ENCODE measurements at regions of chr1 and their contacts with region 1.

Region 1: GRCh38 chr1:11719313-11720032 is 16.5 kb upstream of the AGTRAP start:
- DNase-seq: peak; percentile 73 to 94 (median 90)
- ATAC-seq: peak; percentile 87
- H3K4me3 ChIP-seq: peak overlapping the region; percentile 51 to 66
- H3K4me3 Mint-ChIP-seq: peak overlapping the region; percentile 88
- H3K27ac ChIP-seq: peak overlapping the region; percentile 52 to 74
- H3K27ac Mint-ChIP-seq: peak overlapping the region; percentile 91
- H3K4me1 ChIP-seq: peaks cover 15% of the 10 kb centered on the region
- H3K4me1 Mint-ChIP-seq: peaks cover 13% of the 10 kb centered on the region
- H3K27me3 ChIP-seq: no peaks in the 10 kb centered on the region
- H3K27me3 Mint-ChIP-seq: no peaks in the 10 kb centered on the region
- CTCF ChIP-seq: peak; percentile 96

Region 2: GRCh38 chr1:11248155-11248554 is 471.3 kb before region 1 on chr1:
- CTCF ChIA-PET with region 1: no interaction called
- POLR2A ChIA-PET with region 1: no interaction called
- intact Hi-C with region 1: loop called in 1 of 2 experiments (anchors 5 kb)
- DNase-seq: no peak
- ATAC-seq: no peak
- H3K4me3 ChIP-seq: no peak overlapping the region
- H3K4me3 Mint-ChIP-seq: no peak overlapping the region
- H3K27ac ChIP-seq: no peak overlapping the region
- H3K27ac Mint-ChIP-seq: peak overlapping the region; percentile 45
- H3K4me1 ChIP-seq: no peaks in the 10 kb centered on the region
- H3K4me1 Mint-ChIP-seq: peaks cover 12% of the 10 kb centered on the region
- H3K27me3 ChIP-seq: no peaks in the 10 kb centered on the region
- H3K27me3 Mint-ChIP-seq: no peaks in the 10 kb centered on the region
- CTCF ChIP-seq: no peak

Region 3: GRCh38 chr1:11478571-11479374 is 240.7 kb before region 1 on chr1 and contains the start of gene DISP3:
- CTCF ChIA-PET with region 1: no interaction called
- POLR2A ChIA-PET with region 1: no interaction called
- intact Hi-C with region 1: loop called in 1 of 2 experiments (anchors 10 kb)
- DNase-seq: peak; percentile 44 to 84 (median 63)
- ATAC-seq: peak; percentile 91
- H3K4me3 ChIP-seq: peak within 1 kb of the TSS; percentile 51 to 62
- H3K4me3 Mint-ChIP-seq: peak within 1 kb of the TSS; percentile 70
- H3K27ac ChIP-seq: no peak within 1 kb of the TSS
- H3K27ac Mint-ChIP-seq: no peak within 1 kb of the TSS
- H3K4me1 ChIP-seq: peaks cover 11% of the 10 kb centered on the region
- H3K4me1 Mint-ChIP-seq: peaks cover 15% of the 10 kb centered on the region
- H3K27me3 ChIP-seq: peaks cover 0 to 24% of the 10 kb centered on the region in 2 experiments
- H3K27me3 Mint-ChIP-seq: peaks cover 54% of the 10 kb centered on the region
- CTCF ChIP-seq: peak; percentile 49
- total RNA-seq, gene DISP3: 0.28 to 0.57 TPM

Region 4: GRCh38 chr1:11598461-11598860 is 121.0 kb before region 1 on chr1:
- CTCF ChIA-PET with region 1: no interaction called
- POLR2A ChIA-PET with region 1: no interaction called
- intact Hi-C with region 1: no loop called
- DNase-seq: no peak
- ATAC-seq: no peak
- H3K4me3 ChIP-seq: no peak overlapping the region
- H3K4me3 Mint-ChIP-seq: no peak overlapping the region
- H3K27ac ChIP-seq: no peak overlapping the region
- H3K27ac Mint-ChIP-seq: no peak overlapping the region
- H3K4me1 ChIP-seq: no peaks in the 10 kb centered on the region
- H3K4me1 Mint-ChIP-seq: no peaks in the 10 kb centered on the region
- H3K27me3 ChIP-seq: no peaks in the 10 kb centered on the region
- H3K27me3 Mint-ChIP-seq: peaks cover 25% of the 10 kb centered on the region
- CTCF ChIP-seq: no peak

Region 5: DNA sequence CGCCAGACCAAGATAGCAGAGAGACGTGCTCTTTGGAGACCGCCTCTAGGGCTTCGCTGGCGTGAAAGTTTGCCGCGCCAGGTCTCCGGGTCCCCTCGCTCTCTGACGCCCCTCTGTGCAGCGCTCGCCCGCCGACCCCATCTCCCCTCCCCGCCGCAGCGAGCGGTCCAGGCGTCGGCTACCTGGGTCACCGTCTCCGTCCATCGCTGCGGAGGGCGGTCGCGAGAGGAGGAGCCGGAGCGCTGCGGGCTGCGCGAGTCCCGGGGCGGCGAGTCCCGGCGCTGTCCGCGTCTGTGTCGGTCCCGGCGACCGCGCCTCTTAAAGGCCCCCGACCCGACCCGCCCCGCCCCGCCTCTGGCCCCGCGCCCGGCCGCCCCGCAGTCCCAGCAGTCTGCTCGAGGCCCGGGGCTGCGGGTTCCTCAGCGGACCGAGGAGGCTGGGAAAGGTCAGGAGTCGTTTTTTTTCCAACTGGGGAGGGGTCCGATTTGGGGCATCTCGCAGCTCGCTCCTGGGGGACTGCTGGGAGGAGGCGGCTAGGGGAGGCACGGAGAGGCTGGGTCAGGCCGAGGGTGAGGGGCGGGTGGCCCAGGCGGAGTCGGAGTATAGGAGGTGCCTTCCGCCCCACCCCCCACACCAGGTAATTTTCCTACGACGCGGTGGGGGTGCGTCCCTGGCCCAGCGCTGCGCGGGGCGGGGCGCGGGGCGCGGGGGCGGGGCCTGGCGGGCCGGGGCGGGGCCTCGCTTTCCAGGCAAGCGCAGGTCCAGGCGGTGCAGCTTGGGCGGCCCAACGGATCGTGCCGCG is 65.1 kb before region 1 on chr1 and contains the starts of genes FBXO2 and FBXO44:
- CTCF ChIA-PET with region 1: interaction called, 69 read pairs
- POLR2A ChIA-PET with region 1: interaction called, 62 read pairs
- intact Hi-C with region 1: loop called (anchors 1 kb)
- DNase-seq: peak; percentile 32 to 77 (median 66)
- ATAC-seq: peak; percentile 78
- H3K4me3 ChIP-seq: peak within 1 kb of the TSS; percentile 59 to 66
- H3K4me3 Mint-ChIP-seq: peak within 1 kb of the TSS; percentile 77
- H3K27ac ChIP-seq: peak within 1 kb of the TSS in 1 of 2 experiments; percentile 42
- H3K27ac Mint-ChIP-seq: no peak within 1 kb of the TSS
- H3K4me1 ChIP-seq: peaks cover 32% of the 10 kb centered on the region
- H3K4me1 Mint-ChIP-seq: peaks cover 33% of the 10 kb centered on the region
- H3K27me3 ChIP-seq: no peaks in the 10 kb centered on the region
- H3K27me3 Mint-ChIP-seq: no peaks in the 10 kb centered on the region
- CTCF ChIP-seq: no peak
- total RNA-seq, gene FBXO2: 3.4 to 3.5 TPM
- total RNA-seq, gene FBXO44: 35.9 to 36.0 TPM

Region 6: DNA sequence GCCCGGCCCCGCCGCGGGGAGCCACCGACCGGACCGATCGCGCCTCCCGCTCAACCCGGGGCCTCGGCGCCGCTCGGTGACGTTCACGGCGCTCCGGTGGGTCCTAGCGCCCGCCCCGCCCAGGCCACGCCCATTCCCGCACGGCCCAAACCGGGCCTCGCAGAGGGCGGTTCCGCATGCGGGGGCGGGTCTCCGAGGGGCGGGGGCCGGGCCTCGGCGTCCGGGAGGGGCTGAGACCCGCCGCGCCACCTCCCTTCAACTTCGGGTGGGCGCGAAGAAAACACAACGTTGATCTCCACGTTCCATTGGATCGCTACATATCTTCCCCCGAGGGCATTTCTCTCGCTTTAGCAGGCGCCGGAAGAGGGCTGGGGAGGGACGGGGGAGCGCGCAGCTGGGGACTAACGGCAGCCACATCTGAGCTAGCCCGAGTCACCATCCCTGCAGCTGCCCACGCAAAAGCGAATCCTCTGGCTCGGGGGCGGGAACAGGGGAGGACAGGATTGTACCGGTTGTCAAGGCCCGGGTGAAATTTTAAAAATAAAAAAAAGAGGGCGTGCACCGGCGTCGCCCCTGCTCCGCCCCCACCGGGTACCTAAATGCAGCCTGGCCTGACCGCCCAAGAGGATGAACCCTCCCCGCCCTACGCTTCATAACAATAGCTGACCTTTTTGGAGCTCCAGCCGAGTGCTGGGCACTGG is 38.3 kb before region 1 on chr1 and contains the start of gene MAD2L2:
- CTCF ChIA-PET with region 1: interaction called, 15 read pairs
- POLR2A ChIA-PET with region 1: interaction called, 17 read pairs
- intact Hi-C with region 1: loop called (anchors 1 to 2 kb)
- DNase-seq: peak; percentile 75 to 93 (median 91)
- ATAC-seq: peak; percentile 91
- H3K4me3 ChIP-seq: peak within 1 kb of the TSS; percentile 91 to 95
- H3K4me3 Mint-ChIP-seq: peak within 1 kb of the TSS; percentile 89
- H3K27ac ChIP-seq: peak within 1 kb of the TSS; percentile 54 to 69
- H3K27ac Mint-ChIP-seq: peak within 1 kb of the TSS; percentile 91
- H3K4me1 ChIP-seq: peaks cover 14% of the 10 kb centered on the region
- H3K4me1 Mint-ChIP-seq: peaks cover 18% of the 10 kb centered on the region
- H3K27me3 ChIP-seq: peaks cover 0 to 2% of the 10 kb centered on the region in 2 experiments
- H3K27me3 Mint-ChIP-seq: peaks cover 4% of the 10 kb centered on the region
- CTCF ChIP-seq: no peak
- total RNA-seq, gene MAD2L2: 28.7 to 29.4 TPM

Region 7: GRCh38 chr1:11730429-11730891 is 11.0 kb after region 1 on chr1:
- CTCF ChIA-PET with region 1: interaction called, 6 read pairs
- POLR2A ChIA-PET with region 1: interaction called, 17 read pairs
- intact Hi-C with region 1: loop called in 1 of 2 experiments (anchors 1 kb)
- DNase-seq: peak in 8 of 9 experiments; percentile 16 to 83 (median 48)
- ATAC-seq: peak; percentile 77
- H3K4me3 ChIP-seq: peak overlapping the region; percentile 17 to 40
- H3K4me3 Mint-ChIP-seq: peak overlapping the region; percentile 91
- H3K27ac ChIP-seq: peak overlapping the region in 1 of 2 experiments; percentile 72
- H3K27ac Mint-ChIP-seq: peak overlapping the region; percentile 81
- H3K4me1 ChIP-seq: peaks cover 44% of the 10 kb centered on the region
- H3K4me1 Mint-ChIP-seq: peaks cover 47% of the 10 kb centered on the region
- H3K27me3 ChIP-seq: no peaks in the 10 kb centered on the region
- H3K27me3 Mint-ChIP-seq: no peaks in the 10 kb centered on the region
- CTCF ChIP-seq: no peak

Region 8: GRCh38 chr1:11749203-11749689 is 29.8 kb after region 1 on chr1:
- CTCF ChIA-PET with region 1: interaction called, 12 read pairs
- POLR2A ChIA-PET with region 1: no interaction called
- intact Hi-C with region 1: no loop called
- DNase-seq: peak in 8 of 9 experiments; percentile 23 to 67 (median 44)
- ATAC-seq: peak; percentile 86
- H3K4me3 ChIP-seq: no peak overlapping the region
- H3K4me3 Mint-ChIP-seq: no peak overlapping the region
- H3K27ac ChIP-seq: no peak overlapping the region
- H3K27ac Mint-ChIP-seq: no peak overlapping the region
- H3K4me1 ChIP-seq: peaks cover 9% of the 10 kb centered on the region
- H3K4me1 Mint-ChIP-seq: peaks cover 15% of the 10 kb centered on the region
- H3K27me3 ChIP-seq: no peaks in the 10 kb centered on the region
- H3K27me3 Mint-ChIP-seq: no peaks in the 10 kb centered on the region
- CTCF ChIP-seq: peak; percentile 40

Region 9: DNA sequence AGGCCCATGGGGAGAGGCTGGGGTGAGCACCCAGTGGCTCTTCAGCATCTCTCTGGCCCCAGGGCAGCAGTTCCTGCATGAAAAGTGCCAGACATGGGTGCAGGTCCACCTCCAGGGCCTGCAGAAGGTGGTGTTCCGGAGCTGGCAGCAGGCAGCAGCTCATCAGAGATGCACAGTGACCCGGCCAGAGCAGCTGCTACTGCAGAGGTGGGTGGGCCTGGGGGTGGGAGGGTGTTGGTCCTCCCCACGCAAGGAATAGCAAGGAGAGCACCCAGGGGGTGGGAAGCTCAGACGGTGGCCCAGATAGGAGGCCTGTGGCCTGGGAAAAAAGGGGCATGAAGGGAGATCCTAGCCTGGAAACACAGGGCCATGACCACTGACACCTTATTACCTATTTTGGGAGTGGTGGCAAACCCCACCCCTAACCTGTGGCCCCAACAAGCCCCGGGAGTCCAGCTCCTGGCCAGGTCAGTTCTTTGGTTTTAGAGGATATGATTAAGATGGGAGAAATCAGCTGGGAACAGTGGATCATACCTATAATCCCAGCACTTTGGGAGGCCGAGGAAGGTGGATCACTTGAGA is 62.7 kb after region 1 on chr1:
- CTCF ChIA-PET with region 1: no interaction called
- POLR2A ChIA-PET with region 1: no interaction called
- intact Hi-C with region 1: no loop called
- DNase-seq: no peak
- ATAC-seq: no peak
- H3K4me3 ChIP-seq: no peak overlapping the region
- H3K4me3 Mint-ChIP-seq: no peak overlapping the region
- H3K27ac ChIP-seq: no peak overlapping the region
- H3K27ac Mint-ChIP-seq: no peak overlapping the region
- H3K4me1 ChIP-seq: peaks cover 12% of the 10 kb centered on the region
- H3K4me1 Mint-ChIP-seq: peaks cover 8% of the 10 kb centered on the region
- H3K27me3 ChIP-seq: no peaks in the 10 kb centered on the region
- H3K27me3 Mint-ChIP-seq: no peaks in the 10 kb centered on the region
- CTCF ChIP-seq: no peak